ENCODE measurements at regions of chr2 and their contacts with region 1.

Region 1: DNA sequence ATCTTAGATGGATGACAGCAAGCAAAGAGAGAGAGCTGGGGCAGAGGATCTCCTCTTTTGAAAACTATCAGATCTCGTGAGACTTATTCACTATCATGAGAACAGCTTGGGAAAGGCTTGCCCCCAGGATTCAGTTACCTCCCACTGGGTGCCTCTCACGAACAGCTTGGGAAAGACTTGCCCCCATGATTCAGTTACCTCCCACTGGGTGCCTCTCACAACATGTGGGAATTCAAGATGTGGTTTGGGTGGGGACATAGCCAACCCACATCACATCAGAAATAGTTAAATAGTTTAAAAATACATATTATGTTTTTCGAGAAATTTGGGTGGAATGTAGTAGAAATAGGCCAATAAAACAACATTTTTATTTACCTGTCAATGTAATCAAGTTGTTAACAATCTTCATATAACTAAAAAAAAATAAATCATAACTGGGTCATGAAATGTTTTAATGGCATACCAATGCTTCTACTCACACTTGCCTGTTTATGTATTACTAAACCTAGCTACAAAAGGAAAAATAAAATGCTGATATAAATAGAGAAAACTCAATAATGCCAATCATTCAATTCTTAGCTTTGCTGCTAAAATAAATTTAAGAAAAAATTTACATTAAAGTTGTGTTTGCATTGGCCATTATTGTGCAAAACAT is 608.9 kb downstream of the SUCLG1 start:
- DNase-seq: no peak
- H3K4me3 ChIP-seq: no peak overlapping the region
- H3K27ac ChIP-seq: no peak overlapping the region
- H3K4me1 ChIP-seq: no peaks in the 10 kb centered on the region
- H3K27me3 ChIP-seq: no peaks in the 10 kb centered on the region
- CTCF ChIP-seq: no peak

Region 2: DNA sequence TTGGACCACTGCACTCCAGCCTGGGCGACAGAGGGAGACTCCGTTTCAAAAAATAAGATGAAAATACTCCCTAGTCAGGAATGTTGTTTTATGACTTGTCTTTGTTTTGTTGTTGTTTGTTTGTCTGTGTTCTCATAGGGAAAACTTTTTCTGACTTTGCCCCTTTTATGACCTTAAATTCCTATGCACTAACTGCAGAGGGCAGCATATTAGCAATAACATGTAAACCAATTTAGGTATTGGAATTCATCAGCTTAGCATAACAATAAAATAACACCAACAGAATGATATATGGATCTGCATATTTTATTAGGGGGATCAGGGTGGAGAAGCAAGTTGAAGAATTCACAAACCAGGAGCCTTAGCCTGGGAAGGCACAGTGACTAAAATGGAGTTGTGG is 22.6 kb before region 1 on chr2:
- intact Hi-C with region 1: loop called (anchors 2 kb)
- DNase-seq: no peak
- H3K4me3 ChIP-seq: no peak overlapping the region
- H3K27ac ChIP-seq: no peak overlapping the region
- H3K4me1 ChIP-seq: no peaks in the 10 kb centered on the region
- H3K27me3 ChIP-seq: no peaks in the 10 kb centered on the region
- CTCF ChIP-seq: no peak

Region 3: GRCh38 chr2:83900862-83901261 is 50.7 kb after region 1 on chr2:
- intact Hi-C with region 1: no loop called
- DNase-seq: no peak
- H3K4me3 ChIP-seq: no peak overlapping the region
- H3K27ac ChIP-seq: no peak overlapping the region
- H3K4me1 ChIP-seq: no peaks in the 10 kb centered on the region
- H3K27me3 ChIP-seq: no peaks in the 10 kb centered on the region
- CTCF ChIP-seq: no peak